SK-N-SH (cell line): ENCODE measurements at regions of chr7 and their contacts with region 1.

Region 1: DNA sequence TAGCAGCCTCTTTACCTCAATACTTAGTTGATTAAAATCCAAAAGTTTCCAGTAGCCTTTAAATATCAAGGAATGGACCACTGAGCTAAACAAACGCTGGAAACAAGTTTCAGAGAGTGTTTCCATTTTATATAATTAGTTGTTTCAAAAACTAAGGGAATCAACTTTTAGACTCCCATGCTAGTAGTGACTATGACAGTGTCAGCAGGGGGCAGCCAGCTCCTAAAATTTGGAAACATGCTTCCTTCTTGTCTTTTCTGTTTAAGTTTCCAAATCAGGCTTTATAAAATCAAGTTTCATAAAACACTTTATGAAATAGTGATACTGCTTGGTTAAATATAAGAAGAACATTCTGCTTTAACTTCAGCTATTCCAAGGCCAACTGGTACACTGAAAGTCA is 138.2 kb upstream of the TMEM229A start:
- DNase-seq: peak; percentile 4
- H3K4me3 ChIP-seq: no peak overlapping the region
- H3K27ac ChIP-seq: no peak overlapping the region
- H3K4me1 ChIP-seq: no peaks in the 10 kb centered on the region
- H3K27me3 ChIP-seq: no peaks in the 10 kb centered on the region
- CTCF ChIP-seq: peak; percentile 62
- EP300 ChIP-seq: no peak
- RAD21 ChIP-seq: peak; percentile 81

Region 2: GRCh38 chr7:124196519-124196918 is 25.5 kb after region 1 on chr7:
- CTCF ChIA-PET with region 1: no interaction called
- POLR2A ChIA-PET with region 1: no interaction called
- DNase-seq: no peak
- H3K4me3 ChIP-seq: no peak overlapping the region
- H3K27ac ChIP-seq: no peak overlapping the region
- H3K4me1 ChIP-seq: peaks cover 0 to 2% of the 10 kb centered on the region in 2 experiments; a peak in 2 of 4 replicates
- H3K27me3 ChIP-seq: no peaks in the 10 kb centered on the region
- CTCF ChIP-seq: no peak
- EP300 ChIP-seq: no peak
- RAD21 ChIP-seq: no peak

Region 3: GRCh38 chr7:124790645-124791044 is 619.6 kb after region 1 on chr7:
- CTCF ChIA-PET with region 1: interaction called, 54 read pairs
- POLR2A ChIA-PET with region 1: no interaction called
- DNase-seq: no peak
- H3K4me3 ChIP-seq: no peak overlapping the region
- H3K27ac ChIP-seq: no peak overlapping the region
- H3K4me1 ChIP-seq: peaks cover 0 to 5% of the 10 kb centered on the region in 2 experiments; a peak in 2 of 4 replicates
- H3K27me3 ChIP-seq: no peaks in the 10 kb centered on the region
- CTCF ChIP-seq: no peak
- EP300 ChIP-seq: no peak
- RAD21 ChIP-seq: no peak